ENCODE measurements at regions of chr3 and their contacts with region 1.

Region 1: DNA sequence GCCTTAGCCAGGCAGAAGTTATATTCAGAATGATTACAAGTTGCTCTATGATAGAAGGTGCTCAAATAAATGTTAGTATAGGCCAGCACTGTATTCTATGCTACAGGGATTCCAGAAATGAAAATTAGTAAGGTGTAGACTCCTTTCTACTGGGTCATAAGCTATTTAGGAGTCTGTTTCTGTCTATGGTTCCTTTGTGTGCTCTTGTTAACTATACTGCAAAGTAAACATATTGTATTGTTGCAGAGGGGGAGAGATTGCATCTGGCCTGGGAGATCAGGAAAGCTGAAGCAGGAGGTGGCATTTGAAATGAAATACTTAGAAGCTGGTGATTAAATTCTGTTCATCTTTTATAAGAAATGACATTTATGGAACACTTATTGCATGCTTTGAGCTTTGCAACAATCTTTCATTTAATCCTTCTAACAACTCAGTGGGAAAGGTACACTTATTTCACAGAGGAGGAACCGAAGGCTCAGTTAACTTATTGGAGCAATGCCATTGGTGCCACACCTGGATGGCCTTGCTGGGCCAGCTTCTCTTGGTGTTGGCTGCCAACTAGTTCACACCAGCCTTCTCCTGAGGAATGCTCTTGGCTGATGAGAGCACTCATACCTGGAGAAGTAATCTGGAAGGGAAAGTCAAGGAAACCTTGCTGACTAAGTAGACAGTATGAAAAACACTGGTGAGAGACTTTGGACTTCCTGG is 39.1 kb downstream of the ABHD5 start:
- DNase-seq: peak; percentile 41 to 67
- H3K4me3 ChIP-seq: no peak overlapping the region
- H3K27ac ChIP-seq: no peak overlapping the region
- H3K4me1 ChIP-seq: no peaks in the 10 kb centered on the region
- H3K27me3 ChIP-seq: no peaks in the 10 kb centered on the region
- CTCF ChIP-seq: no peak

Region 2: DNA sequence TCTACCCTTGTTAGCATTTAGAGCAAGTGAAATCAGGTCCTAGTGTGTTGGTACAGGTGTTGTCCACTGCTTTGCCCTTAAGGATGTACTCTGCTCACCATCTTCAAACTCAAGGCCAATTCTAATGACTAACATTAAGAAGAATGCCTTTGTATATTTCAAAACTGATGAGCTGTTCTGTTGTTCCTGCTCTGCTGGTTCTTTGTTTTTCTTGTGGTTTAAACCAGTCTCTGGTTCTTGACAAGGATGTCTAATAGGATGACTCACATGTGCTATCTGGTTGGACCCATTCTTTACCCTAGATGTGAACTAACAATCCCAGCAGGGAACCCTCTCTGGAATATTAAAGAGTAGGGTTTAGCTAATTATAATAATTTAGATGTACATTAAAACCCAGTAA is 21.9 kb before region 1 on chr3:
- CTCF ChIA-PET with region 1: no interaction called
- POLR2A ChIA-PET with region 1: interaction called, 11 read pairs
- intact Hi-C with region 1: no loop called
- DNase-seq: peak; percentile 17 to 99
- H3K4me3 ChIP-seq: no peak overlapping the region
- H3K27ac ChIP-seq: peak overlapping the region; percentile 28
- H3K4me1 ChIP-seq: peaks cover 31% of the 10 kb centered on the region
- H3K27me3 ChIP-seq: no peaks in the 10 kb centered on the region
- CTCF ChIP-seq: no peak